PC-9 (cell line): ENCODE measurements at regions of chr10 and their contacts with region 1.

Region 1: DNA sequence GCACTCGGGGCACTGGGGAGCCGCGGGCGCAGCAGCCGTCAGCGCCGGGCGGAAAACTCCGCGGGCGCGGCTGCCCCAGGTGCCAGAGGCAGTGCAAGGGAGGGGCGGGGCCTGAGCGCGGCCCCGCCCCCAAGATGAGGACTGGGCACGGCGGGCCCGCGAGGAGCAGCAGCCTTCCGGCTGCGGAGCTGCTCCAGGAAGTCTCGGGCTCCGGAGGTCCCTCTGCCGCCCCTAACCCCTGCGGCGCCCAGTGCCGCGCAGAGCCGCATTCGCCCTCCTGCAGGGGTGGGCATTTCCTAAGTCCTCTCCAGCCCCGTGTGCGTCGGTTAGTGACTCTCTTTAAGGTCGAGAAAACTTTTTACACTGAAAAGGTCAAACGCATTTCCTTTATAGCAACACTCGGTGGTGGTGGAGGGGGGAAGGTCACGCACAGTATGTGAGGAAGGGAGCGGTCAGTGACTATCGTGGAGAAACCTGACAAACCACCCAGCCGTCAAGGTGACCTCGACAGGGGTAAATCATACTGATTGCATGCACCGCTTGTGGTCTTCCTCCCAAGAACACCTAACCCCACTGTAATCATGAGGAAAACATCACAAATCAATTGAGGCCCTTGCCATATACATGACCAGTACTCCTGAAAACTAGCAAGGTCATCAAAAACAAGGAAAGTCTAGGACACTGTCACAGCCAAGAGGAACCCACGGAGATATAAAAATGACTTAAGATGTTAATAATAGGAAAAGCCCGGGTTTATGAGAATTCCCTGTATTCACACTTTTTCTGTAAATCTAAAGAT is at the start of gene ANXA11:
- DNase-seq: peak; percentile 87 to 88
- H3K4me3 ChIP-seq: peak within 1 kb of the TSS; percentile 92
- H3K27ac ChIP-seq: peak within 1 kb of the TSS; percentile 98
- H3K4me1 ChIP-seq: peaks cover 62% of the 10 kb centered on the region
- H3K27me3 ChIP-seq: no peaks in the 10 kb centered on the region
- CTCF ChIP-seq: no peak
- total RNA-seq, gene ANXA11: 287 and 318 TPM in 2 replicates

Region 2: DNA sequence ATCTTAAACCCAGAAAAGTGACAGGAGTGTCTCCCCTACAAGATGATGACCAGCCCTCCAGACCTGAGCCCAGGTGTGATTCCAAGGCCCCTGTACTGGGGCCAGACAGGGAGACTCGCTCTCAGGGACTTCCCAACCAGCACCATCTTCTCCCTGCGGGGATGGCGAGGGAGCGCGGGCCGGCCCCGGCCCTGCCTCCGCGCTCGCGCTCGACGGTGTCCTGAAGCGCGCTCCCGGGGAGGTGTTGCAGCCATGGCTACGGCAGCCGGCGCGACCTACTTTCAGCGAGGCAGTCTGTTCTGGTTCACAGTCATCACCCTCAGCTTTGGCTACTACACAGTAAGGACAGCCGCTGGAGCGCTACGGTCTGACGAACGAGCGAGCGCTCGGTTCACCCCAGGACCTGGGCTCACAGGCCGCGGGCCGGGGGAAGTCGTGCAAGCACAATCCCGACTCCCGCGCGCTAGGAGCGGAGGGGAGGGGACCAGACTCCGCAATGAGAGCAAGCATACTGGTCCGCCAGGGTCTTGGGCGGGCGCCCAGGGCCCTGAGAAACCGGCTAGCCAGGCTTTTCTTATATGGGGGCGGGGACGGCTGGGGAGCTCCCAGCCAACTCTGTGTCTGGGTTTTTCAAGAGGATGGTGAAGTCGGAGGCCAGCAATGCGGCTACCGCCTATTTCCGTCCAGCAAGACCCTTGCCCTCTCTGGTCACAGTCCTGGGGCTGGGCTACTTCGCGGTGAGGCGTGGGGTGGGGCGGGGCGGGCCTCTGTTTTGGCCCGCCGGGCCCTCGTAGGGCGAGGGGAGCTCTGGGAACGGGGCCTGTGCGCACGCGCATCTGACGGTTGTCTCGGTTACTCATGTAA is 127.0 kb before region 1 on chr10 and contains the start of gene TMEM254:
- CTCF ChIA-PET with region 1: no interaction called
- POLR2A ChIA-PET with region 1: no interaction called
- intact Hi-C with region 1: loop called (anchors 10 kb)
- DNase-seq: peak; percentile 92 to 95
- H3K4me3 ChIP-seq: peak within 1 kb of the TSS; percentile 88
- H3K27ac ChIP-seq: peak within 1 kb of the TSS; percentile 78
- H3K4me1 ChIP-seq: peaks cover 41% of the 10 kb centered on the region
- H3K27me3 ChIP-seq: no peaks in the 10 kb centered on the region
- CTCF ChIP-seq: no peak
- total RNA-seq, gene TMEM254: 30.2 and 36.6 TPM in 2 replicates

Region 3: GRCh38 chr10:80158598-80159127 is 47.0 kb before region 1 on chr10:
- CTCF ChIA-PET with region 1: interaction called, 5 read pairs
- POLR2A ChIA-PET with region 1: interaction called, 11 read pairs
- intact Hi-C with region 1: loop called (anchors 1 kb)
- DNase-seq: peak; percentile 81 to 94
- H3K4me3 ChIP-seq: no peak overlapping the region
- H3K27ac ChIP-seq: peak overlapping the region; percentile 32
- H3K4me1 ChIP-seq: peaks cover 55% of the 10 kb centered on the region
- H3K27me3 ChIP-seq: no peaks in the 10 kb centered on the region
- CTCF ChIP-seq: no peak

Region 4: GRCh38 chr10:80171248-80171660 is 34.4 kb before region 1 on chr10:
- CTCF ChIA-PET with region 1: interaction called, 6 read pairs
- POLR2A ChIA-PET with region 1: interaction called, 4 read pairs
- intact Hi-C with region 1: loop called (anchors 1 kb)
- DNase-seq: peak; percentile 92 to 98
- H3K4me3 ChIP-seq: no peak overlapping the region
- H3K27ac ChIP-seq: peak overlapping the region; percentile 75
- H3K4me1 ChIP-seq: peaks cover 52% of the 10 kb centered on the region
- H3K27me3 ChIP-seq: no peaks in the 10 kb centered on the region
- CTCF ChIP-seq: no peak

Region 5: DNA sequence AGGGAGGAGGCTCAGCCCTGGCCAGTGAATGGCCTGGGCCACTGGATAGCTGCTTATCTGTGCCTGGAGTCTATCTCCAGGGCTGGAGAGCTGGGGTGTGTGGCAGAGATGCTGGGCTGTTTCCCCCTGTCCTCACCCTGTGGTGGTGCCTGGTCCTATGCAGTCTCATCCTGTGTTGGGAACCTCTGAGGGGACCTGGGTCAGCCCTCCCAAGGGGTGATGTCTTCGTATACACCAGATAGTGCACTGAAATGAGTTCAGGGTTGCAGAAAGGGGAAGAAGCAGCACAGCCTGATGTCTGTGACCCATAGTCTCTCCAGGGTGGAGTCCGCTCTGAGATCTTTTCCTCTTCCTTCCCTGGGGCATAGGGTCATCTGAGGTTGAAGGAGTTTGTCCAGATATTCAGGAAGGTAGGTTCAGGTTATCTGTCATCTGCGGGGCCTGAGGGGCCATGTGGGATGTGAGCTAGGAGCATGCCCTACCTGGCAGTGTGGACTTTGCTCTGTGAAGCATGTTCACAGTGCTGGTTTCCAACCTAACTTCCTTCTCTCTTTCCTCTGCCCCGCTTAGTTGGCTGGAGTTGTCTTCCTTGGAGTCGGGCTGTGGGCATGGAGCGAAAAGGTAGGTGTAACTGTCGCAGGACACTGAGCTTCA is 298.6 kb after region 1 on chr10:
- CTCF ChIA-PET with region 1: interaction called, 5 read pairs
- POLR2A ChIA-PET with region 1: no interaction called
- intact Hi-C with region 1: loop called (anchors 2 kb)
- DNase-seq: peak; percentile 41 to 65
- H3K4me3 ChIP-seq: peak overlapping the region; percentile 8; the same call in 1 of the 2 replicates
- H3K27ac ChIP-seq: peak overlapping the region; percentile 99
- H3K4me1 ChIP-seq: peaks cover 100% of the 10 kb centered on the region
- H3K27me3 ChIP-seq: no peaks in the 10 kb centered on the region
- CTCF ChIP-seq: no peak